ENCODE measurements at regions of chr1 and their contacts with region 1.

Region 1: GRCh38 chr1:181152892-181153633 is 64.6 kb downstream of the IER5 start:
- DNase-seq: peak; percentile 95 to 99 (median 98)
- H3K4me3 ChIP-seq: peak overlapping the region in 3 of 7 experiments; percentile 7 to 46 (median 41)
- H3K27ac ChIP-seq: peak overlapping the region in 1 of 2 experiments; percentile 67
- H3K4me1 ChIP-seq: peaks cover 33 to 58% (median 51%) of the 10 kb centered on the region in 4 experiments
- H3K27me3 ChIP-seq: peaks cover 0 to 4% (median 0%) of the 10 kb centered on the region in 5 experiments

Region 2: GRCh38 chr1:180881806-180882509 is 271.1 kb before region 1 on chr1:
- CTCF ChIA-PET with region 1: interaction called, 13 read pairs
- POLR2A ChIA-PET with region 1: no interaction called
- DNase-seq: peak; percentile 43 to 64 (median 62)
- H3K4me3 ChIP-seq: no peak overlapping the region
- H3K27ac ChIP-seq: no peak overlapping the region
- H3K4me1 ChIP-seq: no peaks in the 10 kb centered on the region
- H3K27me3 ChIP-seq: no peaks in the 10 kb centered on the region

Region 3: DNA sequence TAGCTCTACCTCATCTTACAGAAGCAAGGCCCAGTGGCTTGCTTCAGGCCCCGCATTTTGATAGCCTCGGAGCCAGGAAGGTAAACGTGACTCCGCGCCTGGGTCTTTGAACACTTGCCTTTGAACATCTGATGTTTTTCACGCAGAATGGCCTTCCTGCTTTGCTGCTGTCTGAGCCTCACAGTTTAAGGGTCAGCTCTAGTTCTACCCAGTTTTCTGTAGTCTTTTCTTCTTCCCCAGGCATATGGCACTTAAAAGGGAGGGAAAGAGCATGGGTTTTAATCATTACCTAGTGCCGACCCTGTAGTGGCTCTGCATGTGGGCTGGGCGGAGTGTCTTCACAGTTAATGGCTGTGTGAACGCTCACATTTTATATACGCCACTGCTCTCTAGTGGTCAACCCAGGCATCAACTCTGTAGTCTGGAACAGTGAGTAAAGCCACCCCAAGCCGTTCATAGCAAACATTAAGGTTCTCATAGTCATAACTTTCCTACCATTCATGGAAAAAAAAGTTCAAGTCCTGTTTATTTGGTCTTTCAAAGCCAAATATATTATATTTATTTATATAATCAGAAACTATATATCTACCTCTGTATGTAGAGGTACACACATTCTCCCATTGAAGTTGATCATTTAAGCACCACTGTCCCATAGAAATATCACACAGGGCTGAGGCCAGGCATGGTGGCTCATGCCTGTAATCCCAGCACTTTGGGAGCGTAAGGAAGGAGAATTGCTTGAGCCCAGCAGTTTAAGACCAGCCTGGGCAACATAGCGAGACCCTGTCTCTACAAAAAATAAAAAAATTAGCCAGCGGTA is 13.5 kb after region 1 on chr1:
- CTCF ChIA-PET with region 1: interaction called, 20 read pairs
- POLR2A ChIA-PET with region 1: no interaction called
- DNase-seq: peak; percentile 79 to 90 (median 89)
- H3K4me3 ChIP-seq: no peak overlapping the region
- H3K27ac ChIP-seq: no peak overlapping the region
- H3K4me1 ChIP-seq: peaks cover 0 to 4% (median 0%) of the 10 kb centered on the region in 4 experiments
- H3K27me3 ChIP-seq: peaks cover 0 to 6% (median 0%) of the 10 kb centered on the region in 5 experiments

Region 4: DNA sequence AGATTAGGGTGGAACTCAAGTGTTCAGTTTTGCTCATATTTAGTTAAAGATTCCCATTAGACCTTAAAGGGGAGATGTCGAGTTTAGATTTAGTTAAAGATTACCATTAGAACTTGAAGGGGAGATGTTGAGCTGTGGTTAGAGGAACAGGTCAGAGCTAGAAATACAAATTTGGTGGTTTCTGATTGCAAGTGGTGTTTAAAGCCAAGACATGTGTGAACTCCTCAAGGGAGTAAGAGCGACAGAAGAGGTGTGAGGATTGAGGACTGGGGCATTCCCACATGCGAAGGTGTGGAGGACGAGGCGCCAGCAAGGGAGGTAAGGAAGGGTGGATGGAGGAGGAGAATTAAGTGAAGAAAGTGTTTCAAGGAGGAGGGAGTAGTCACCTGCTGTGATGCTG is 104.1 kb after region 1 on chr1:
- CTCF ChIA-PET with region 1: no interaction called
- POLR2A ChIA-PET with region 1: no interaction called
- DNase-seq: no peak
- H3K4me3 ChIP-seq: no peak overlapping the region
- H3K27ac ChIP-seq: no peak overlapping the region
- H3K4me1 ChIP-seq: no peaks in the 10 kb centered on the region
- H3K27me3 ChIP-seq: peaks cover 0 to 9% (median 4%) of the 10 kb centered on the region in 5 experiments